ENCODE measurements at regions of chr1 and their contacts with region 1.

Region 1: DNA sequence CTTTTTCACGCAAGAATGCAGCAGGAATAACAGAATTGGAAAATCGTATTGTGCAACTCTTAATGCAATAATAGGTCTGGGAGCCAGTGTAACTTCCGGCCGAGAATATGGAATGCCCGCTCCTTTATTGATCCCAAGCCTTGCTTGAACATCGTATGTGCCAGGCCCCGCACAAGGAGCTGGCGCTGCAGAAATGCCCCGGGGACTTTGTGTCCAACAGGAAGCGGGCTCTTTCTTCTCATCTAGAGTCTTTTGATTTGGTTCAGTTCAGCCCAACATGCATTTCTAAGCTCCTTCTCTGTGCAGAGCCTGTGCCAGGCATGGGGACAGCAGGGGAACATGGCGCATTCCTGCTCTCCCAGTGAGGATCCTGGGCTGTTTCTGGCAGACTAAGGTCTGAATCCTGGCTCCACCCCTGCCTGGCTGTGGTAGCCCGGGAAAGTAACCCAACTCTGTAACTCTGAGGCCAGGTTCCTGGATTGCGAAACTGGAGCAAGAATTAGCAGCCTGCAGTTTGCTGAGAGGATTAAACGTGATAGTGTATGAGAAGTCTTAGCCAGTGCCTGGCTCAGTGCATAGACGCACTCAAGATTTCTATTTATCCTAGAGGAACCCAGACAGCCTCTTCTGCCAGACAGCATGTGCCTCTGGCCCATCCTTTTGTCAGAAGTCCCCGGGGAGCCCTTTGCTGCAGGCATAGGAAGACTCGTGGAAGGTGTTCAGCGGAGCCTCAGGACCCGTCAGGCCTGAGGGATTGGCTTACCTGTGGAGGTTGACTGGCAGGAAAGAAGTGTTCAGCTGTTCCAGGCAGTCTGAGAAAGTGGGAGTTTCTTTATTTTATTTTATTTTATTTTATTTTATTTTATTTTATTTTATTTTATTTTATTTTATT is 994 bp upstream of the CDCP2 start:
- DNase-seq: peak in 1 of 2 experiments; percentile 66
- H3K4me3 ChIP-seq: no peak overlapping the region
- H3K27ac ChIP-seq: no peak overlapping the region
- H3K4me1 ChIP-seq: no peaks in the 10 kb centered on the region; a peak in 2 of 7 replicates
- H3K27me3 ChIP-seq: no peaks in the 10 kb centered on the region
- CTCF ChIP-seq: no peak
- EP300 ChIP-seq: no peak
- POLR2A ChIP-seq: no peak
- RAD21 ChIP-seq: no peak

Region 2: GRCh38 chr1:53968125-53968513 is 185.7 kb before region 1 on chr1:
- CTCF ChIA-PET with region 1: no interaction called
- POLR2A ChIA-PET with region 1: no interaction called
- DNase-seq: no peak
- H3K4me3 ChIP-seq: no peak overlapping the region
- H3K27ac ChIP-seq: no peak overlapping the region
- H3K4me1 ChIP-seq: no peaks in the 10 kb centered on the region; a peak in 2 of 7 replicates
- H3K27me3 ChIP-seq: no peaks in the 10 kb centered on the region
- CTCF ChIP-seq: no peak
- EP300 ChIP-seq: no peak
- POLR2A ChIP-seq: no peak
- RAD21 ChIP-seq: no peak

Region 3: GRCh38 chr1:54001591-54001990 is 152.2 kb before region 1 on chr1:
- CTCF ChIA-PET with region 1: no interaction called
- POLR2A ChIA-PET with region 1: no interaction called
- DNase-seq: no peak
- H3K4me3 ChIP-seq: no peak overlapping the region
- H3K27ac ChIP-seq: no peak overlapping the region
- H3K4me1 ChIP-seq: no peaks in the 10 kb centered on the region
- H3K27me3 ChIP-seq: no peaks in the 10 kb centered on the region
- CTCF ChIP-seq: no peak
- EP300 ChIP-seq: no peak
- POLR2A ChIP-seq: no peak
- RAD21 ChIP-seq: no peak

Region 4: GRCh38 chr1:54137514-54138061 is 16.2 kb before region 1 on chr1:
- CTCF ChIA-PET with region 1: interaction called, 16 read pairs
- POLR2A ChIA-PET with region 1: interaction called, 4 read pairs
- DNase-seq: no peak
- H3K4me3 ChIP-seq: no peak overlapping the region
- H3K27ac ChIP-seq: no peak overlapping the region
- H3K4me1 ChIP-seq: peaks cover 12 to 29% (median 18%) of the 10 kb centered on the region in 4 experiments
- H3K27me3 ChIP-seq: no peaks in the 10 kb centered on the region
- CTCF ChIP-seq: no peak
- EP300 ChIP-seq: no peak
- POLR2A ChIP-seq: no peak
- RAD21 ChIP-seq: no peak